ENCODE measurements at regions of chr10 and their contacts with region 1.

Region 1: DNA sequence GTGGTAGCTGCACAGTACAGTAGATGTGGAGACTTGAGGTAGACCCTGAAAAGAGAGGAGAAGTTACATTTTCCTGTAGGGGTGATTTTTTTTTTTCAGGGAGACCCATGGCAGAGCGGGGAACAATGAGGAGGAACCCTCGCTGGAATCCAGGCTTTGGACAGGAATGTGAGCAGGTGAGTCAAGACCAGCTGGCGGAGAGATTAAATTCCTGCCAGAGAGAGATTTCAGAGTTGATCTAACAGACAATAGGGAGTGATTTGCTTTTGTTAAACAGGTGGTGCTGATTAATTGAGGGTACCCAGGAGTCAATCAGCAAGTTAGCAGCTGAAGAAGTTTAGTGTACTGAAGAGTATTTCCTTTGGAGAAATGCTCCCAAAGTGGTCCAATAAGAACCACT is 41.6 kb upstream of the MINDY3 start:
- DNase-seq: no peak
- ATAC-seq: no peak

Region 2: GRCh38 chr10:16545116-16545736 is 643.3 kb after region 1 on chr10:
- intact Hi-C with region 1: loop called in 1 of 2 experiments (anchors 5 kb)
- DNase-seq: no peak
- ATAC-seq: peak; percentile 41 to 59

Region 3: GRCh38 chr10:16777473-16778370 is 875.8 kb after region 1 on chr10:
- intact Hi-C with region 1: loop called in 1 of 2 experiments (anchors 2 kb)
- DNase-seq: peak; percentile 52
- ATAC-seq: peak; percentile 68 to 79

Region 4: DNA sequence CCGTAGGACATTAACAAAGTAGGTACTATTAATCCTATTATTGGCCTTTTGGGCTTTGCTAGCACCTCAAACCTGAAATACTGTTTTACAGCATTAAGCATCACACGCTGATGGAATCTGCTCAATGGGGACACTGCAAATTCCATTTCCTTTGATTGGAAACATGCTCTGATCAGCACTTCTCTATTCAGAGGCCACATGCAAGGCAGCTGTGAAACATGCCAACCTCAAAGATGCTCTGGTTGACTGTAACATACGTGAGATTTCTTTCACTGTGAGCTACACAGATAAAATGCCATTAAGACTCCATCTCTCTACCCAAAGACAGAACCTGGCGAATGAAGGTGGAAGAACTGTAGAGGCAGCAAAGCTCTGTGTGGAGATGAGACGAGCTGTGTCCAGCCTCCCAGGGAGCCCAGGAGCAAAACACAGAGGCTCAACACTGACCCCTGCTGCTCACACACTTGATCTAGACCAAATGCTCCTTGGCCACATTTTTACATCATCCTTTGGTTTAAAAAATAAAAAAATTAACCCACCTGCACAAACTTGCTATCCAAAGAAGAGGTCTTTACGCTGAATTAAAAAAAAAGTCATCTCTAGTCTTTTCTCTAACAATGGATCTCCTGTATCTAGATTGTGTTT is 907.3 kb after region 1 on chr10:
- intact Hi-C with region 1: loop called in 1 of 2 experiments (anchors 10 kb)
- DNase-seq: peak; percentile 44
- ATAC-seq: peak; percentile 41 to 56

Measured in left cardiac atrium (tissue), 4 donors.